ENCODE measurements at regions of chr2 and their contacts with region 1.

Region 1: DNA sequence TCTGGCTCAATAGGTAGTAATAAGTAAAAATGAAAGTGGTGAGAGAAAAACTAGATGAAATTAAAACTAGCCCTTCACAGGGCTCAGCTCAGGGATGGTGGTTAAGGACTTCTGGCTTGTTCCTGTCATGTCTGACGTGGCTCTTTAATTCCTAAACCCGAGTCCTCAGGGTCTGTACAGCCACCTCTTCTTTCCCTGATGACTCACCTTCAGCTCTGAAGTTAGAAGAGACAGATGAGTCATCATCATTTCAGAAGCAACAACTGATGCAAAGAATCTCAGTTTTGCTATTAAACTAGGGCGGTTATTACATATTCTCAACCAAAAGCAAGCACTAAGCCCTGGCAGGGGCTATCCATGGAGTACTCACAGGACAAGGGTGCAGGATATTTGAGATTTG is 24.0 kb upstream of the ITGB6 start:
- DNase-seq: peak; percentile 58
- H3K4me3 Mint-ChIP-seq: no peak overlapping the region
- H3K27ac Mint-ChIP-seq: peak overlapping the region; percentile 50
- H3K4me1 Mint-ChIP-seq: peaks cover 52% of the 10 kb centered on the region
- H3K27me3 Mint-ChIP-seq: peaks cover 17% of the 10 kb centered on the region

Region 2: GRCh38 chr2:159760326-159760725 is 463.7 kb before region 1 on chr2:
- CTCF ChIA-PET with region 1: no interaction called
- intact Hi-C with region 1: no loop called
- DNase-seq: no peak
- H3K4me3 Mint-ChIP-seq: no peak overlapping the region
- H3K27ac Mint-ChIP-seq: no peak overlapping the region
- H3K4me1 Mint-ChIP-seq: peaks cover 9% of the 10 kb centered on the region
- H3K27me3 Mint-ChIP-seq: no peaks in the 10 kb centered on the region

Region 3: GRCh38 chr2:160109936-160110673 is 114.0 kb before region 1 on chr2:
- CTCF ChIA-PET with region 1: interaction called, 13 read pairs
- intact Hi-C with region 1: no loop called
- DNase-seq: peak; percentile 74
- H3K4me3 Mint-ChIP-seq: no peak overlapping the region
- H3K27ac Mint-ChIP-seq: no peak overlapping the region
- H3K4me1 Mint-ChIP-seq: no peaks in the 10 kb centered on the region
- H3K27me3 Mint-ChIP-seq: peaks cover 10% of the 10 kb centered on the region

Region 4: DNA sequence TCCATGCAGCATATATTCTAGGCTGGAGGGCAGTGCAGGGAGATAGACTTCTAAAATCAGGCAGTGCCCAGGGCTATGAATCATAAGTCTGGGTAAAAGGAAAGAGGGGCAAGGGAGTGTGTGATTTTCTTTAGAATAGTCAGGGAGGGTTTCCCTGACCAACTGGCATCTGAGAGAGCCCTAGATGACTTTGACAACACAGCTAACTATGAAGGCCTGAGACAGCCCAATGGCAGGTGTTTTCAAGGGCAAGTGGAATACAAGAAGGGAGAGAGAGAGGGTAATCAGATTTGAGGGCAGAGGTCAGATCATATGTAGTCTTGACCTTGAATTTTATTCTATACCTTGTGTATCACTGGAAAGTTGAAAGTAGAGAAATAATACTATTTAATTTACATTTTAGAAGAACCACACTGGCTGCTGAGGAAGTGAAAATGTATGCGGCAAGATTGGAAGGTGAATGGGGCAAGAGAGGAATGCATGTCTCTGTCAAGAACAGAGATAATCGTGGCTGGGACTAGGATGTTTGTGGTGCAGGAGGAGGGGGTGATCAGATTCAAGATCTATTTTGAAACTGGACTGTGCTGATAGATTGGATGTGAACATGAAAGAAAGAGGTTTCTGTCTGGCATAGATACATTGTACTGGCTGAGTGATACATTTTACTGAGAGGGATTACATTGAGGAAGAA is 22.1 kb before region 1 on chr2:
- CTCF ChIA-PET with region 1: no interaction called
- intact Hi-C with region 1: no loop called
- DNase-seq: no peak
- H3K4me3 Mint-ChIP-seq: no peak overlapping the region
- H3K27ac Mint-ChIP-seq: no peak overlapping the region
- H3K4me1 Mint-ChIP-seq: peaks cover 2% of the 10 kb centered on the region
- H3K27me3 Mint-ChIP-seq: no peaks in the 10 kb centered on the region

Region 5: GRCh38 chr2:160294339-160294803 is 70.3 kb after region 1 on chr2:
- CTCF ChIA-PET with region 1: interaction called, 3 read pairs
- intact Hi-C with region 1: loop called (anchors 1 kb)
- DNase-seq: peak; percentile 59
- H3K4me3 Mint-ChIP-seq: no peak overlapping the region
- H3K27ac Mint-ChIP-seq: peak overlapping the region; percentile 67
- H3K4me1 Mint-ChIP-seq: peaks cover 80% of the 10 kb centered on the region
- H3K27me3 Mint-ChIP-seq: no peaks in the 10 kb centered on the region

Region 6: DNA sequence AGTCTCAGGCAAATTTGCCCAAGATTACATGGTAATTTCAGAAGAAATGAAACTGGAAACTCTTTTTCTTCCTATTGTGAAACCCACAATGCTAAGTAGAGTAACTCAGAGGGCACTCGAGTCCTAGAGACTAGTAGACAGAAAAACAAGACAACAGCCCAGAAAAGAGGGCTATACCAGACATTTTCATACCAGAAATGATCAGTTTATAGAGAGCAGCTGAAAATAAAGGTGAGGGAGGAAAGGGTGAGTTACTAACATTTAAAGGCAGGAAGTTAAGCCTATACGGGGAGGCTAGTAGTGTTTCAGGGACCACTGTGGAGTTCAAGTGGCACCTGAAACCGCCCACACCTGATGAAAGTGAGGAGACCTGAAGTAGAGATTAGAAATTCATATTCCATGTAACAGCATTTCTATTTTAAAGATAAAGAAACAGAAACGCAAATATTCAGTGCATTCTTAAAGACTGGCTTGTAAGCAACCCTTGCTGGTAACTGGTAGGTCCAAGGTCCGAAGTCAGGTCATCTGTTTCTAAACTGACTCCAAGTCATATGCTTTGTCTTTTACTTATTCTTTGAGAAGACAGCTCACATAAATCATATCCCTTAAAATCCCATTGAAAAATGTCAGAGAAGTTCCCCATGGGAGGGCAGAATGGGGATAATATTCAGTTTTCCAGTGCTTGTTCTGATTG is 121.2 kb after region 1 on chr2:
- CTCF ChIA-PET with region 1: no interaction called
- intact Hi-C with region 1: loop called (anchors 1 kb)
- DNase-seq: no peak
- H3K4me3 Mint-ChIP-seq: peak overlapping the region; percentile 51
- H3K27ac Mint-ChIP-seq: peak overlapping the region; percentile 66
- H3K4me1 Mint-ChIP-seq: peaks cover 69% of the 10 kb centered on the region
- H3K27me3 Mint-ChIP-seq: no peaks in the 10 kb centered on the region

Region 7: DNA sequence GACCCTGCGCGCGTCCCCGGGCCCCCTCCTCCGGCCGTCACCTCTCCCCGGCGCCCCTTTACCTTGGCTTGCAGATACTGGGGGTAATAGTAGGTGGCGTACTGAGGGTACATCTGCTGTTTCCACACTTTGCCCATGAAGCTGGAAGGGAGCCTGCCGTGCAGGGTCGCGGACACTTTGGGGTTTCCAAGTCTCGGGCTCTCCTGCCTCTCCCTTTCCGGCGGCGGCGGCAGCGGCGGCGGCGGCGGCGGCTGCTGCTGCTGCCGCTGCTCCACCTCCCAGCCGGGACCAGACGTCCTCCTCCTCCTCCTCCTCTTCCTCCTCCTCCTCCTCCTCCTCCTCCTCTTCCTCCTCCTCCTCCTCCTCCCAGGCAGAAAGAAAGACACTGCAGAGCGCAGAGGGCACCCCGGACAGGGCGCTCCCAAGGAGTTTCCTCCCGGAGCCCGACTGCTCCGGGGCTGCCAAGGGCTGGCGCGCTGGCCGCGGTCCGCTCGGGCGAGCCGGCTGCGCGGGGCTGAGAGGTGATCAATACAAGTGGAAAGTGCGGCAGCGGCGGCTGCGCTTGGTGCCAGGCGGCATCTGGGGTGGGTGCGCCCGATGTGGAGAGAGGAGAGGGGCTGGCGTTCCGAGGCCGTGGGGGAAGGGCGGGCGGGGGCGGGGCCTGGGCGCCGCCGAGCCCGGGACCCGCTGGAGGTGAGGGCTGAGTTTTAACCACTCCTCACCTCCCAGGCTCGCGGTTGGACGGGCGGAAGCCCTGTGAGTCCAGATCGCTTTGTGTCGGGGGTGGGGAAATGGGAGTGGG is 269.4 kb after region 1 on chr2 and contains the start of gene RBMS1:
- CTCF ChIA-PET with region 1: no interaction called
- intact Hi-C with region 1: loop called (anchors 1 kb)
- DNase-seq: peak; percentile 58
- H3K4me3 Mint-ChIP-seq: peak within 1 kb of the TSS; percentile 93
- H3K27ac Mint-ChIP-seq: peak within 1 kb of the TSS; percentile 93
- H3K4me1 Mint-ChIP-seq: peaks cover 43% of the 10 kb centered on the region
- H3K27me3 Mint-ChIP-seq: no peaks in the 10 kb centered on the region
- total RNA-seq, gene RBMS1: 27.8 to 29.1 TPM

Region 8: GRCh38 chr2:161166538-161167409 is 942.7 kb after region 1 on chr2:
- CTCF ChIA-PET with region 1: no interaction called
- intact Hi-C with region 1: loop called (anchors 1 kb)
- DNase-seq: peak; percentile 88
- H3K4me3 Mint-ChIP-seq: no peak overlapping the region
- H3K27ac Mint-ChIP-seq: peak overlapping the region; percentile 74
- H3K4me1 Mint-ChIP-seq: peaks cover 88% of the 10 kb centered on the region
- H3K27me3 Mint-ChIP-seq: no peaks in the 10 kb centered on the region

Measured in activated naive CD4-positive, alpha-beta T cell treated with anti-CD3 and anti-CD28 coated beads for 36 hours (primary cell).